A673 (cell line): ENCODE measurements at regions of chr19 and their contacts with region 1.

Region 1: DNA sequence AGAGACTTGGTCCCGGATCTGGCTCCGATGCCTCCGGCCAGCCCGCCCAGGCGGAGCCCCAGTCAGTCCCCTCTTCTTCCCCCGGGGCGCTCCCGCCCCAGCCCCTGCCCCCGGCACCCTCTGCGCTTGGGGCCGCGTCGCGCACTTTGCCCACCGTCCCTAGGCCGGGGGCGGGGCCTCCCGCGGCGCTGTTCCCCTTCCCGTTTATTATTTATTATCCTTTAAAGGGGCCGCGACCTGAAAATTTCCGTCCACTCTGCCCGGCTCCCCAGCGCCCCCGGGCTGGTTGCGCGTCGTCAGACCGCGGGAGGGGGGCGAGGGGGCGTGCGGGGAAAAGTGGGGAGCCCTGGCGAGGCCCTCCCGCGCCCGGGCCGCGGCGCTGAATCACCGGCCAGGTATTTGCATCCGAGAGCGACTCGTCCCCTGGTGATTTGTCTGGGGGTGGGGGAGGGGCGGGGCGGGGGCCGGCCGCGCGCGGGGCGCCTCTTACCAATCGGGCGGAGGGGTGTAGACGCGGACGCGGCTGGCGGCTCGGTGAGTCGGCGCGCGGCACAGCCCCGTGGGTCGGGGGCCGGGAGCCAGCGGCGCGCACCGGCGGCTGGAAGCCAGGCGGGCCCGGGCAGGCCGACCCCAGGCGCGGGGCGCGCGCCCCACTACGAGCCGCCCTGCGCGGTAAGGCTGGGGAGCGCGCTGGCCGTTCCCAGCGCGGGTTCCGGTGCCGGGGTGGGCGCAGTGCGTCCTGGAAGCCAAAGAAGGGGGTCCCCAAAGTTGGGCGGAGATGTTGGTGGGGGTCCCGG is at the start of gene ARID3A:
- DNase-seq: peak; percentile 91
- H3K4me3 ChIP-seq: peak within 1 kb of the TSS; percentile 97
- H3K27ac ChIP-seq: peak within 1 kb of the TSS; percentile 92
- H3K4me1 ChIP-seq: peaks cover 15% of the 10 kb centered on the region
- H3K27me3 ChIP-seq: no peaks in the 10 kb centered on the region
- CTCF ChIP-seq: no peak
- total RNA-seq, gene ARID3A: 19.6 and 26.3 TPM in 2 replicates

Region 2: GRCh38 chr19:984165-984967 is 58.6 kb after region 1 on chr19 and contains the start of gene WDR18:
- CTCF ChIA-PET with region 1: no interaction called
- POLR2A ChIA-PET with region 1: no interaction called
- intact Hi-C with region 1: loop called (anchors 1 kb)
- DNase-seq: peak; percentile 96
- H3K4me3 ChIP-seq: peak within 1 kb of the TSS; percentile 80
- H3K27ac ChIP-seq: peak within 1 kb of the TSS; percentile 98
- H3K4me1 ChIP-seq: peaks cover 13% of the 10 kb centered on the region
- H3K27me3 ChIP-seq: no peaks in the 10 kb centered on the region
- CTCF ChIP-seq: no peak
- total RNA-seq, gene WDR18: 109 and 116 TPM in 2 replicates

Region 3: GRCh38 chr19:996051-996838 is 70.5 kb after region 1 on chr19:
- CTCF ChIA-PET with region 1: interaction called, 3 read pairs
- POLR2A ChIA-PET with region 1: no interaction called
- intact Hi-C with region 1: loop called (anchors 5 kb)
- DNase-seq: peak; percentile 70
- H3K4me3 ChIP-seq: peak overlapping the region; percentile 27
- H3K27ac ChIP-seq: no peak overlapping the region
- H3K4me1 ChIP-seq: peaks cover 20% of the 10 kb centered on the region
- H3K27me3 ChIP-seq: peaks cover 48% of the 10 kb centered on the region
- CTCF ChIP-seq: no peak

Region 4: DNA sequence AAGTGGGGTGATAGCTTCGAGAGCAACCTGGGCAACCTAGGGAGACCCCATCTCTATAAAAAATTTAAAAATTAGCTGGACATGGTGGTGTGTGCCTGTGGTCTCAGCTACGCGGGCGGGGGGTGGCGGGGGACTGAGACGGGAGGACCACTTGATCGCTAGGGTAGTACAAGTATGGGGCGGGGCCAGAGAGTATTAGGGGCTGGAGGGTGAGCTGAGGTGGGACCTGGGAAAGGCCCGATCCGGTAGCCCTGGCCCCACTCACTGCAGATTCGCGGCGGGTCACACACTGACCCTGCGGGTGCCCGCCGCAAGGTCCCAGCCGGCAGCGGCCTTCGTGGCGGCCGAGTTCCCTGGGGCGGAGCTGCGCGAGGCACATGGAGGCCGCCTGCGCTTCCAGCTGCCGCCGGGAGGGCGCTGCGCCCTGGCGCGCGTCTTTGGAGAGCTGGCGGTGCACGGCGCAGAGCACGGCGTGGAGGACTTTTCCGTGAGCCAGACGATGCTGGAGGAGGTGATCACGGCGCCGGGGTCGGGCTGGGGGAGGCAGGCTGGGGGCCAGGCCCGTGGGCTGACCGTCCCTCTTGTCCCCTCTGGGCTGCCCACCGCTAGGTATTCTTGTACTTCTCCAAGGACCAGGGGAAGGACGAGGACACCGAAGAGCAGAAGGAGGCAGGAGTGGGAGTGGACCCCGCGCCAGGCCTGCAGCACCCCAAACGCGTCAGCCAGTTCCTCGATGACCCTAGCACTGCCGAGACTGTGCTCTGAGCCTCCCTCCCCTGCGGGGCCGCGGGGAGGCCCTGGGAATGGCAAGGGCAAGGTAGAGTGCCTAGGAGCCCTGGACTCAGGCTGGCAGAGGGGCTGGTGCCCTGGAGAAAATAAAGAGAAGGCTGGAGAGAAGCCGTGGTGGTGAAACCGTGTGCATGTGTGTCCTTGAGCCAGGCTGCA is 139.2 kb after region 1 on chr19:
- CTCF ChIA-PET with region 1: no interaction called
- POLR2A ChIA-PET with region 1: no interaction called
- intact Hi-C with region 1: no loop called
- DNase-seq: peak; percentile 88
- H3K4me3 ChIP-seq: no peak overlapping the region
- H3K27ac ChIP-seq: no peak overlapping the region
- H3K4me1 ChIP-seq: peaks cover 16% of the 10 kb centered on the region
- H3K27me3 ChIP-seq: no peaks in the 10 kb centered on the region
- CTCF ChIP-seq: peak; percentile 78

Region 5: DNA sequence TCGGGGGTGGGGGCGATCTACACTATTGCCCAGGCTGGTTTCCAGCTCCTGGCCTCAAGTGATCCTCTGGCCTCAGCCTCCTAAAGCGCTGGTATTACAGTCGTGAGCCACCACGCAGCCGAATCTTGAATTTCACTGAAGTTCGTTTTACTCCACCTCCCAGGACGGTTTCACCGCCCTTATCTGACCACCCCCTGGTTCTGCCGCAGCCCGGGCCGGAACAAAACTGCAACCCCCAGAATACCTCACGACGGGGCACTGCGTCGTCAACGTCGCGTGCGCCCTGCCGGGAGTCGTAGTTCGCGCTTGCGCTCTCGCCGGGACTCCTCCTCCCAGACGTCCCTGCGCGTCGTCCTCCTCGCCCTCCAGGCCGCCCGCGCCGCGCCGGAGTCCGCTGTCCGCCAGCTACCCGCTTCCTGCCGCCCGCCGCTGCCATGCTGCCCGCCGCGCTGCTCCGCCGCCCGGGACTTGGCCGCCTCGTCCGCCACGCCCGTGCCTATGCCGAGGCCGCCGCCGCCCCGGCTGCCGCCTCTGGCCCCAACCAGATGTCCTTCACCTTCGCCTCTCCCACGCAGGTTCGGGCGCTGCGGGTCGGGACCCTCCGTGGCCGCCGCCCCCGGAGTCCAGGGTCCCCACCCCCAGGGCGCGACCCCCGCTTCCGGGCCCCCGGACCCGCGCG is 315.8 kb after region 1 on chr19 and contains the start of gene ATP5F1D:
- CTCF ChIA-PET with region 1: no interaction called
- POLR2A ChIA-PET with region 1: no interaction called
- intact Hi-C with region 1: loop called (anchors 5 kb)
- DNase-seq: peak; percentile 97
- H3K4me3 ChIP-seq: peak within 1 kb of the TSS; percentile 98
- H3K27ac ChIP-seq: peak within 1 kb of the TSS; percentile 95
- H3K4me1 ChIP-seq: peaks cover 49% of the 10 kb centered on the region
- H3K27me3 ChIP-seq: no peaks in the 10 kb centered on the region
- CTCF ChIP-seq: no peak
- total RNA-seq, gene ATP5F1D: 237 and 250 TPM in 2 replicates